H1 (cell line): ENCODE measurements at regions of chr16 and their contacts with region 1.

Region 1: DNA sequence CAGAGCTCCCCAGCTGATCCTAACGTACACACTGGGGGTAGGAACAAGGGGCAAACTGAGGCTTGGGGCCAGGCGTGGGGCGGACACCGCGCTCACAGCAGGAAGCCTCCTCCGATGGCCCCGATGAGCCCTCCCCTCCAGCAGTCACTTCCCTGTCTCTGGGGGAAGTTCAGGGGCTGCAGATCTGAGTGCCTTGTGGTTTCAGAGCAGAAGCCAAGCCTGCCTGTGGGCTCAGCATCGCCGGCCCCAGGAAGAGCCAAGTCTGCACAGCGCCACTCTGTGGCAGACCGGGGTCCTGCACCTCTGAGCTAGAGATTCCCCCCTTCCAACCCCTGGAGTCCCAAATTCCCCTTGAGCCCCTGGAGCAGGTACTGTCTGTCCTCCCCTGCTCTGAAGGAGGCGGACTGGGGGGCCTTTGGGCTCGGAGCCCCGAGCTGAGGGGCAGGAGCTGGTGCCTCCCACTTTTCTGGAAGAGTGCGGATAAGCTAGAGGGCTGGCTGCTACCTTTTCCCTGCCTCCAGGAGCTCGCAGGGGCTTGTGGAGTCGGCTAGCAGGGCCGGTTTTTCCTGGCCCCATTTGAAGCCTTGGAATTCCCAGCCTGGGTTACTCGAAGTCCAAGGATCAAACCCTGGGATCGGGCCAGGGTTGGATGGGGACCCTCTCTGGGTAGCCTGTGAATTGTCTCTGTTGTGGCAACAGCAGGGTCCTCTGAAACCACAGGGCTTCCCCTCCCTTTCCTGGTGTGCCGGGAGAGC is 2.9 kb downstream of the GSE1 start:
- DNase-seq: peak in 1 of 2 experiments; percentile 98
- H3K4me3 ChIP-seq: peak overlapping the region in 3 of 4 experiments; percentile 58 to 92 (median 67); a peak in 4 of 8 replicates
- H3K27ac ChIP-seq: no peak overlapping the region
- H3K4me1 ChIP-seq: peaks cover 4 to 37% (median 27%) of the 10 kb centered on the region in 4 experiments
- H3K27me3 ChIP-seq: no peaks in the 10 kb centered on the region
- CTCF ChIP-seq: peak in 2 of 3 experiments; percentile 92 to 97; a peak in 3 of 4 replicates
- EP300 ChIP-seq: no peak
- POLR2A ChIP-seq: no peak
- RAD21 ChIP-seq: peak; percentile 68 to 74

Region 2: DNA sequence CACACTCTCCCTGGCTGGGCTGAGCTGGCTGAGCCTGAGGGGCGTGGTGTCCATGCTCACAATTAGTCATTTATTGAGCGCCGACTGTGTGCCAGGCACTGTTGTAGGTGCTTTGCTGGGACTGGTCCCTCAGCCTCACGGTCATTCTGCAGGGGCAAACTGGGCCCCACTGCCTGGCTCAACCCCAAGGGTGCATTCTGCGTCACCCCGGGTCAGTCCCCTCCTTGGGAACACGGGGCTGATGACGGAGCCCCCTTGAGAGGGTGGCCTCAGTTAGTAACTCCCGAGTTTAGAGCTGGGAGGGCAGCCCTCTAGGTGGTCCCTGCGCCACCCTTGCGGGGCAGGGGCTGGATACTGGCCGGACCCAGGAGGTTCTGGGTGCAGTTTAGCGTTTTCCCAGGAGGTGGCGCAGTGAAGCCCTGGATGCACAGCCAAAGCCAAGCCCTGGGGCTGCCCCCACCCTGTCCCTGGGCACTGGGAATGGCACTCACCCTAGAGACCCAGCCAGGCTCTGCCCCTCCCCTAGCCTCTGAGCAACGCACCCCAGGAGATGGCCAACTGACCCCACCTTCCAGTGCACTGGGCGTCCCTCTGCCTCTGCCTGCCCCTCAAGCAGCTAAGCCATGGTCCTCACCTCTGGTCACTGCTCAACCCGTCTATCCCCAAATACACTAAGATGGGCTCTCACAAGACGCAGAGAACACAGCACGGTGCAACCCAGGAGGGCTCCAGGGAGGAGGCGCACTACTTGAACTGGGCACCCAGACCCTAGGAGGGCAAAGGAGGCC is 246.1 kb before region 1 on chr16:
- CTCF ChIA-PET with region 1: interaction called, 14 read pairs
- POLR2A ChIA-PET with region 1: no interaction called
- DNase-seq: peak in 1 of 2 experiments; percentile 97
- H3K4me3 ChIP-seq: no peak overlapping the region
- H3K27ac ChIP-seq: no peak overlapping the region
- H3K4me1 ChIP-seq: peaks cover 8 to 18% (median 16%) of the 10 kb centered on the region in 4 experiments
- H3K27me3 ChIP-seq: peaks cover 0 to 11% (median 3%) of the 10 kb centered on the region in 4 experiments; a peak in 3 of 7 replicates
- CTCF ChIP-seq: peak; percentile 74 to 87 (median 80)
- EP300 ChIP-seq: no peak
- POLR2A ChIP-seq: no peak
- RAD21 ChIP-seq: peak; percentile 48 to 64

Region 3: DNA sequence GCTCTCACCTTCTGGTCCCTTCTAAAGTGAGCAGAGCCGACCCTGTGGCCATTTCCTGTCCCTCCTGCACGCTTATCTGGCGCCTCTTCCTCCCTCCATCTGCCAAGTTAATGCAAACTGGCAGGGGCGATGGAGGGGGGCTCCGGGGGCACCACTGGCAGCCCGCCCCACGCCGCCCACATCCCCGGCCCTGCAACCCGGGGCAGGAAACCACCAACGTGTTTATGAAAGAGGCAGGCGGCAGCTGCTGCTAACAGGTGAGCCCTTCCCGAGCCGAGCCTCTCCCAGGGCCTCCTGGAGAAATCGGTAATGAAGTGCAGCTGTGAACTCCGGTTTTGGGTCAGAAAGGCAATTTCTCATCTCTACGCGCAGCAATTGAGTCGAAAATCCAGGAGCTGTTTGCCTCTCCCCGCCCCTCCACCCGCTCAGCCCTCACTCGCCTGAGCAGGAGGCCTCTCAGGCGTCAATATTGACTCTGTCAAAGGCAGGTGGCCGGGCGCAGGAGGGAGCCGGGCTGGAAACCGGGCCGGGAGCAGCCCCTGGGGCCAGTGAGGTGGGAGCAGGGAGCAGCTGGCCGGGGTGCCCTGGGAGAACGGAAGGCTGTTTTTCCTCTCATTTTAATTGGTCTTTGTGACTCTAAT is 167.4 kb before region 1 on chr16:
- CTCF ChIA-PET with region 1: interaction called, 22 read pairs
- POLR2A ChIA-PET with region 1: no interaction called
- DNase-seq: no peak
- H3K4me3 ChIP-seq: no peak overlapping the region
- H3K27ac ChIP-seq: no peak overlapping the region
- H3K4me1 ChIP-seq: peaks cover 0 to 23% (median 16%) of the 10 kb centered on the region in 4 experiments; a peak in 6 of 7 replicates
- H3K27me3 ChIP-seq: no peaks in the 10 kb centered on the region
- CTCF ChIP-seq: no peak
- EP300 ChIP-seq: no peak
- POLR2A ChIP-seq: no peak
- RAD21 ChIP-seq: no peak

Region 4: DNA sequence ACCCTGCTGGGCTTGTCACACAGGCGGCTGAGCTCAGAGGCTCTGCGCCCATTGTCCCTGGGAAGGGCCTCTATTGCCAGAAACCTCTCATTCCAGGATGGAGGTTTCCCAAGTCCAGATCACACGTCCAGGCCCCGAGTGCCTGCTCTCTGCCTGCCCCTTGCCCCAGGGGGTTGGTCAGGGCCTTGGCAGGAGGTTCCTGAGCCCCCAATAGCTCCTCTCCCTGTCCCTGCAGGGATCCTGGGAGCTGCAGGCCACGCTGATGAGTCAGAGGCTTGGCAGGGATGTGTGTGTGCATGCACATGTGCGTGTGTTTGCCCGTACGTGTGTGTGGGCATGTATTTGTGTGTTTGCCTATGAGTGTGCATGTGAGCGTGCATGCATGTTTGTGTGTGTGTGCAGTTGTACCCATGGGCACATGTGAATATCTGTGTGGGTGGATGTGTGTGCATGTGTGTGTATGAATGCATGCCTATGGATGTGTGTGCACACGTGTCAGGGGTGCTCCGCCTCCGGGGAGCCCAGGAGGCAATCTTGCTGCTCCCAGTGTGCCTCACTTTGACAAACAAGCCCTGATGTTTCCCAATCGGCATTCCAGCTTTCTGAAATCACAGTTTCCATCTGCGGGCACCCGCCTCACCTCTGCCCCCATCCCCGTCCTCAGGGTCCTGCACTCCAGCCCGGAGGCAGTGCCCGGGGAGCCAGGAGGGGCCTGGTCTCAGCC is 101.3 kb before region 1 on chr16:
- CTCF ChIA-PET with region 1: interaction called, 13 read pairs
- POLR2A ChIA-PET with region 1: interaction called, 3 read pairs
- DNase-seq: no peak
- H3K4me3 ChIP-seq: no peak overlapping the region
- H3K27ac ChIP-seq: no peak overlapping the region
- H3K4me1 ChIP-seq: peaks cover 0 to 20% (median 14%) of the 10 kb centered on the region in 4 experiments; a peak in 6 of 7 replicates
- H3K27me3 ChIP-seq: no peaks in the 10 kb centered on the region; a peak in 1 of 7 replicates
- CTCF ChIP-seq: no peak
- EP300 ChIP-seq: no peak
- POLR2A ChIP-seq: no peak
- RAD21 ChIP-seq: no peak

Region 5: GRCh38 chr16:85564277-85565051 is 51.6 kb before region 1 on chr16:
- CTCF ChIA-PET with region 1: interaction called, 30 read pairs
- POLR2A ChIA-PET with region 1: interaction called, 4 read pairs
- DNase-seq: no peak
- H3K4me3 ChIP-seq: no peak overlapping the region
- H3K27ac ChIP-seq: no peak overlapping the region
- H3K4me1 ChIP-seq: peaks cover 14 to 52% (median 27%) of the 10 kb centered on the region in 4 experiments
- H3K27me3 ChIP-seq: no peaks in the 10 kb centered on the region
- CTCF ChIP-seq: peak; percentile 53 to 70 (median 68)
- EP300 ChIP-seq: no peak
- POLR2A ChIP-seq: no peak
- RAD21 ChIP-seq: peak in 1 of 2 experiments; percentile 18; a peak in 1 of 4 replicates

Region 6: GRCh38 chr16:85592700-85593493 is 23.1 kb before region 1 on chr16:
- CTCF ChIA-PET with region 1: interaction called, 26 read pairs
- POLR2A ChIA-PET with region 1: interaction called, 3 read pairs
- DNase-seq: no peak
- H3K4me3 ChIP-seq: no peak overlapping the region
- H3K27ac ChIP-seq: no peak overlapping the region
- H3K4me1 ChIP-seq: peaks cover 5 to 25% (median 17%) of the 10 kb centered on the region in 4 experiments
- H3K27me3 ChIP-seq: 0 out of 7 replicates have a peak, but pooled peaks cover 0 to 3% (median 0%) of the 10 kb centered on the region in 4 experiments
- CTCF ChIP-seq: no peak
- EP300 ChIP-seq: no peak
- POLR2A ChIP-seq: no peak
- RAD21 ChIP-seq: no peak

Region 7: GRCh38 chr16:85634747-85635544 is 18.9 kb after region 1 on chr16:
- CTCF ChIA-PET with region 1: interaction called, 93 read pairs
- POLR2A ChIA-PET with region 1: interaction called, 4 read pairs
- DNase-seq: no peak
- H3K4me3 ChIP-seq: no peak overlapping the region
- H3K27ac ChIP-seq: no peak overlapping the region
- H3K4me1 ChIP-seq: peaks cover 0 to 11% (median 0%) of the 10 kb centered on the region in 4 experiments; a peak in 4 of 7 replicates
- H3K27me3 ChIP-seq: no peaks in the 10 kb centered on the region
- CTCF ChIP-seq: peak in 2 of 3 experiments; percentile 57 to 66; a peak in 3 of 4 replicates
- EP300 ChIP-seq: no peak
- POLR2A ChIP-seq: no peak
- RAD21 ChIP-seq: no peak; a peak in 1 of 4 replicates

Region 8: DNA sequence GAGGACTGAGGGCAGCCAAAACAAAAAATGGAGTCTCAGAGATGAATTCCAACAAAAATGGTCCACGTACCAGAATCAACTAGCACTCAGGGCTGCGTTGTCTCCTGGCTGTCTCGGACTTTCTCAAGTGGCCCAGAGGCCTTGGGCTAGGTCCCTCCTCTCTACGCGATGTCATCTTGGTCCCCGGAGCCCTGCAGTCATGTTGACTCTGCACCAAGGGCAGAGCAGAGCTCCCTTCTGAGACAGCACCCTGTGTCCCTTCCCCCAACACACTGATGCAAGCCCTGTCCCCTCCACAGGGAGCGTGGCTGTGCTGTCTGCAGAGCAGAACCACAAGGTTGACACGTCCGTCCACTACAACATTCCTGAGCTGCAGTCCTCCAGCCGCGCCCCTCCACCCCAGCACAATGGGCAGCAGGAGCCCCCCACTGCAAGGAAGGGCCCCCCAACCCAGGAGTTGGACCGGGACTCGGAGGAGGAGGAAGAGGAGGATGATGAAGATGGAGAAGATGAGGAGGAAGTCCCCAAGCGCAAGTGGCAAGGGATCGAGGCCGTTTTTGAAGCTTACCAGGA is 51.9 kb after region 1 on chr16:
- CTCF ChIA-PET with region 1: no interaction called
- POLR2A ChIA-PET with region 1: no interaction called
- DNase-seq: no peak
- H3K4me3 ChIP-seq: no peak overlapping the region
- H3K27ac ChIP-seq: no peak overlapping the region
- H3K4me1 ChIP-seq: no peaks in the 10 kb centered on the region
- H3K27me3 ChIP-seq: no peaks in the 10 kb centered on the region
- CTCF ChIP-seq: no peak
- EP300 ChIP-seq: no peak
- POLR2A ChIP-seq: no peak
- RAD21 ChIP-seq: no peak

Region 9: DNA sequence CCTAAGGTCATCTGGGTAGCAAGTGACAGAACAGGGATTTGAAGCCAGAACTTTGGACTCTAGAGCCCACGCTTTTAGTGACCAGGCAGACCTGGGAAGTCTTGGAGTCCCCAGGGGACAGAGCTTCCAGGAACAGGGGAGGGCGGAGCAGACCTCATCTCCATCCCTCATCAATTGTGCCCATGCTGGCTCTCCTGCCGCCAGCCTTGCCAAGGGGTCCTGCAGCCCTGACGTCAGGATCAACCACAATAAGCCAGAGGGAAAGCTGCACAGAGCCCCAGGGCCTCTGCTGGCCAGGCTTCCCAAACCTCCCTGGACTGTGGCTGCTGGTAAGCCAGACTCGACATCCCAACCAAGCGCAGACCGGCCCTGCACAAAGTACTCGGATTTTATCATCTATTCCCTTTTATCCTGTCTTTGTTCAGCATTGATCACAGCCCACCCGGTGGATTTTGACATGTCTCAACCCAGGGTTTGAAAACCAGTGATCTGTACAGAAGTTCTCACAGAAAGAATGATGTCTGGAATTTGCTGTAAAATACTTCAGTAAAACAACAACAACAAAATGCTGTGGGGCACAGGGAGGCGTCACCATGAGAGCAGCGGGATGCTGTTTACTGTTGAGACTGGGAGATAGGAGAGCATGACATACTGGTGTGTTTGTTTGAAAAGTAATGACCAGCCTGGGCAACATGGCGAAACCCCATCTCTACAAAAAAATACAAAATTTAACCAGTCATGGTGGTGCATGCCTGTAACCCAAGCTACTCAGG is 123.1 kb after region 1 on chr16:
- CTCF ChIA-PET with region 1: no interaction called
- POLR2A ChIA-PET with region 1: no interaction called
- DNase-seq: no peak
- H3K4me3 ChIP-seq: no peak overlapping the region
- H3K27ac ChIP-seq: no peak overlapping the region
- H3K4me1 ChIP-seq: peaks cover 2 to 8% (median 7%) of the 10 kb centered on the region in 4 experiments
- H3K27me3 ChIP-seq: no peaks in the 10 kb centered on the region; a peak in 1 of 7 replicates
- CTCF ChIP-seq: no peak
- EP300 ChIP-seq: no peak
- POLR2A ChIP-seq: no peak
- RAD21 ChIP-seq: no peak